ENCODE measurements at regions of chr7 and their contacts with region 1.

Region 1: DNA sequence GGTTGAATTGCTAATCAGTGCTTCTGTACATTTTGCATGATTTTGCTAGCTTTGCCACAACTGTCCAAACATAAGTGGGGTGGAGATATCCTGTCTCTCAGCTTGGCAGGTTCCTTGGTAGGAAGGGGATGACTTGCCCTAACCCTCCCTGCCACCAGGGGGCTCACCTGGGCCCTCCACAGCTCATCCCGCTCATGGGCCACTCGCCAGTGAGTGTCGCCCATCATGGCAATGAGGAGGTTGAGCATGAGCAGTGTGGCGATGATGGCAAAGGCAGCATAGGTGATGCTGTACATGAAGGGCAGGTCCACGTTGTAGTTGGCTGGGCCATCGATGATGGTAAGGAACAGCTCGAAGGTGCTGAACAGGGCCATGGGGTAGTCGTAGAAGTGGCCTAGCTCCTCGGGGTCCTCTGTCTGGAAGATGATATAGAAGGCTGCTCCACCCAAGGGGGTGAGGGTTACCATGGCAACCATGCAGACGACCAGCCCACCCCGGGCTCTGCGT is 12.2 kb downstream of the TRPV6 start:
- DNase-seq: peak; percentile 58
- H3K4me3 Mint-ChIP-seq: no peak overlapping the region
- H3K27ac Mint-ChIP-seq: no peak overlapping the region
- H3K4me1 Mint-ChIP-seq: no peaks in the 10 kb centered on the region
- H3K27me3 Mint-ChIP-seq: no peaks in the 10 kb centered on the region

Region 2: DNA sequence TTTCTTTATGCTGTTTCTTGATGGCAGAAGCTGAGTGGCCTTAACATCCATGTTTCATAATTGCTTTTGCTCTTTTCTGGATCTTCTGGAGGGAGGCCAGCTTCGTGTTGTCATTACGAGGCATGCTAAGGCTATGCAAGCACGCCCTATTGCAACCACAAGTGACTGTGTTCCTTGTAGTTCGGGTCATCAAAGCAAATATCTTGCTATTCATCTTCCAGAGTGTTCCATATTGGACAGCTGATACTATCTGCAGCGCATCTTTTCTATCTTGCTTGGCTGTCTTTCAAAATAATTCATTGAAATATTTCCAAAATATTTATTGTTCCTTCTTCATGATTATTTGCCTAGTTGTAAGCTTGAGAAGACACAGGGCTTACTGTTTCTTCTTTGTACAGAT is 13.5 kb before region 1 on chr7:
- CTCF ChIA-PET with region 1: interaction called, 18 read pairs
- POLR2A ChIA-PET with region 1: no interaction called
- intact Hi-C with region 1: no loop called
- DNase-seq: no peak
- H3K4me3 Mint-ChIP-seq: no peak overlapping the region
- H3K27ac Mint-ChIP-seq: no peak overlapping the region
- H3K4me1 Mint-ChIP-seq: peaks cover 11% of the 10 kb centered on the region
- H3K27me3 Mint-ChIP-seq: no peaks in the 10 kb centered on the region